GM18951 (cell line): ENCODE measurements at regions of chr10 and their contacts with region 1.

Region 1: GRCh38 chr10:6563075-6563474 is 17.0 kb downstream of the PRKCQ start:
- POLR2A ChIP-seq: no peak

Region 2: GRCh38 chr10:6445501-6446316 is 117.4 kb before region 1 on chr10:
- in situ Hi-C with region 1: loop called (anchors 10 kb)
- POLR2A ChIP-seq: no peak

Region 3: DNA sequence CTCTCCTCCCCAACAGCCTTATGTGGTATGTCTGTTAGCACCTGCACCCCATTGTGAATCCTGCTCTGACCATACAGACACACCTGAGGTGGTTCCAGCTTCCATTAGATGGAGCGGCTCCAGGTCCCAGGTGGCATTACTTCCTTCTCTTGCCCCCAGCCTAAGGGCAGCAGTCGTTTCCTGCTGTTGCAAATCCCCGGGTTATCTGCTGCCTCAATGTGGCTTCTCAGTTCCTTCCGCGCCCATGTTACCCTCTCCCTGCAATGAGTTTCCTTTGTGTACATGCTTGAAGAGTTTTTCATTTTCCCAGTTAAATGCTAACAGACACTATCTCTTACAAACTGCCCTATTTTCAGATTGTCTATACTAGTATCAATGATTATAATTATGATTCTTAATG is 79.8 kb after region 1 on chr10:
- in situ Hi-C with region 1: no loop called
- POLR2A ChIP-seq: no peak